Aorta (tissue), 5 donors: ENCODE measurements at regions of chrX and their contacts with region 1.

Region 1: GRCh38 chrX:45769761-45770582 is 569.3 kb upstream of the DIPK2B start:
- DNase-seq: peak; percentile 80 to 88
- ATAC-seq: peak; percentile 92
- H3K4me3 ChIP-seq: peak overlapping the region; percentile 42 to 87
- H3K27ac ChIP-seq: peak overlapping the region; percentile 44 to 76
- H3K4me1 ChIP-seq: no peaks in the 10 kb centered on the region
- H3K27me3 ChIP-seq: no peaks in the 10 kb centered on the region

Region 2: DNA sequence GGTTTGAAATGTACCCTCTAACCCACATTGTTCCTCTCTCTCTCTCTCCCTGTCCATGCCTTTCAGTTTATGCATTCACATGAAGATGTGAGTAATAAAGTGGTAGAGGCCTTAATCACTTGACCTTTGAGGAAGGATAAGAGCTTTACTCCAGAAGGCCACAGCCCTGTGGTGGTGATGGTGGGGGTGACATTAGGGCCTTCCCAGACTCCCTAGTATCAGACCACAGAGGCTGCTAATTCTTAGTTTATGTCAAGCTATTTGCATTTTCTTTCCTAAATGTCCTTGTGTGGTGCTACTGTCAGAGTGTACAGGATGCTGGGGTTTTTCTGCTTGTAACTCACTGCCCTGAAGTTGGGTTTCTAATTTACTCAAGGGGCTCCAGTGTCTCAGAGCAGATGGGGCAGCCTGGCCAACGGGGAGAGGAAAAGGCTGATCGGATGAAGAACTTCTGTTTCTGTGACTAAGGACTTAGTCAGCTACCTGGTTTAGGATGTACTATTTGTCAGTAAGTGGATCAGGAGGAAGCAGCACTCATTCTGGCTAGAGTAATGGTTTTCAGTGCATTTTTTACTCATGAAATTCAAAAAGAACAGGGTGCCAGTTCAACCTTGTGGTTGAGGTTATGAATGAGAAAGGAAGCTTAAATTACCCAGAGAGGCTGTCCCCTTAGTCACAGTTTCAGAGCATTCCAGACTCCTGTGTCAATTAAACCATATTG is 59.7 kb before region 1 on chrX:
- intact Hi-C with region 1: loop called in 1 of 2 experiments (anchors 10 kb)
- DNase-seq: no peak
- ATAC-seq: no peak
- H3K4me3 ChIP-seq: no peak overlapping the region
- H3K27ac ChIP-seq: peak overlapping the region in 1 of 2 donors; percentile 54
- H3K4me1 ChIP-seq: no peaks in the 10 kb centered on the region
- H3K27me3 ChIP-seq: no peaks in the 10 kb centered on the region

Region 3: GRCh38 chrX:46376246-46376885 is 606.4 kb after region 1 on chrX:
- intact Hi-C with region 1: loop called in 1 of 2 experiments (anchors 10 kb)
- DNase-seq: no peak
- ATAC-seq: peak; percentile 62
- H3K4me3 ChIP-seq: no peak overlapping the region
- H3K27ac ChIP-seq: no peak overlapping the region
- H3K4me1 ChIP-seq: no peaks in the 10 kb centered on the region
- H3K27me3 ChIP-seq: no peaks in the 10 kb centered on the region